GM12878 (cell line): ENCODE measurements at regions of chr4 and their contacts with region 1.

Region 1: DNA sequence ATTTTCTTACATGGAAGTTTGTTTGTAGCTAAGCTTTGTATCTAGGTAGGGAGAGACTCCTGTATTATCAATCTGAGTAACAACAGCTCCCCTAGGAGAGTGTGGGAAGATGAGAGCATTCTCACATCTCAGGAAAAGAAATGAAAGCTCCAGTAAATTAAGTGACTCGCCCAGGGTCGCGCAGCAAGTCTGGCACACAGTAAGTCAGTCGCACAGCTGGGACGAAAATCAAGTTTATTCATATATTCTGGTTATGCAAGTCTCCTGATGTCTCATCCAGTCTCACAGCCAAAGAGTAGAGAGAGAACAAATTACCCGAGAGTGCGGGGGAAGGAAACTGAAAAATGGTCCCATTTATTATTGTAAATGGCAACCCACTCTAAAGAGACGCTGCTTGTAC is 216.1 kb downstream of the STK32B start:
- DNase-seq: no peak
- ATAC-seq: no peak
- H3K4me3 ChIP-seq: no peak overlapping the region
- H3K27ac ChIP-seq: no peak overlapping the region
- H3K4me1 ChIP-seq: no peaks in the 10 kb centered on the region
- H3K27me3 ChIP-seq: no peaks in the 10 kb centered on the region
- CTCF ChIP-seq: no peak
- EP300 ChIP-seq: no peak
- POLR2A ChIP-seq: no peak
- RAD21 ChIP-seq: no peak

Region 2: DNA sequence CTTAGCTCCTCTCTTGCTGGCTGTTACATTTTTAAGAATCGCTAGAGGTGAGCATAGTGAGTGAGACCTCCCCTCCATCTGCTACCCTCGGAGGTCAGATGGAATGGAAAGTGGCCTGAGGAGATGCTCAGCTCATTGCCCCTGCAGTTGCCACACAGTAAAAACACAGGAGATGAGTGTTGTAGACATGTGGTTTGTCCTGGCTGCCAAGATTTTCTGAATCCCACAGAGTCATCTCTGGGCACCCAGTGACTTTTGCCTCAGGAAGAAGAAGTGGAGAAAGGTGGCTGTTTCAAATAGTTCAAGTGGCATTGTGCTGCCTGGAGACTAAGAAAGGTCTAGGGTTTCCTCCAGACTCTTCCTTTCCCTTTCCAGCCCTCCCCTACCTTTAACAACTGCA is 54.9 kb after region 1 on chr4:
- CTCF ChIA-PET with region 1: no interaction called
- POLR2A ChIA-PET with region 1: no interaction called
- RAD21 ChIA-PET with region 1: no interaction called
- SMC1A ChIA-PET with region 1: no interaction called
- in situ Hi-C with region 1: loop called (anchors 10 kb)
- intact Hi-C with region 1: no loop called
- DNase-seq: no peak
- ATAC-seq: no peak
- H3K4me3 ChIP-seq: no peak overlapping the region
- H3K27ac ChIP-seq: no peak overlapping the region
- H3K4me1 ChIP-seq: no peaks in the 10 kb centered on the region
- H3K27me3 ChIP-seq: no peaks in the 10 kb centered on the region
- CTCF ChIP-seq: no peak
- EP300 ChIP-seq: no peak
- POLR2A ChIP-seq: no peak
- RAD21 ChIP-seq: no peak

Region 3: DNA sequence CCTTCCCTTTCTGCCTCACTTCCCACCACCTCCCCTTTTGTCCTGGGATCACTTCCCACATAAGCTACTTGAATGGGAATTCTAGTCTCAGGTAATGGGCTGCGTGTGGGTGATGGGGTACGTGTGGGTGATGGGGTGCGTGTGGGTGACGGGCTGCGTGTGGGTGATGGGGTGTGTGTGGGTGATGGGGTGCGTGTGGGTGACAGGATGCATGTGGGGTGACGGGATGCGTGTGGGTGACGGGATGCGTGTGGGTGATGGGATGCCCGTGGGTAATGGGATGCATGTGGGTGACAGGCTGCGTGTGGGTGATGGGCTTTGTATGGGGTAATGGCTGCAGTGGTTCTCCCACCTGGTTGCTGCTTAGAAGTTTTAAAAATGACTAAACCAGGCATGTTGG is 397.4 kb after region 1 on chr4:
- CTCF ChIA-PET with region 1: no interaction called
- POLR2A ChIA-PET with region 1: no interaction called
- RAD21 ChIA-PET with region 1: no interaction called
- SMC1A ChIA-PET with region 1: no interaction called
- in situ Hi-C with region 1: no loop called
- intact Hi-C with region 1: no loop called
- DNase-seq: no peak
- ATAC-seq: no peak
- H3K4me3 ChIP-seq: no peak overlapping the region
- H3K27ac ChIP-seq: no peak overlapping the region
- H3K4me1 ChIP-seq: no peaks in the 10 kb centered on the region
- H3K27me3 ChIP-seq: no peaks in the 10 kb centered on the region
- CTCF ChIP-seq: no peak
- EP300 ChIP-seq: no peak
- POLR2A ChIP-seq: no peak
- RAD21 ChIP-seq: no peak